HEK293 (cell line): ENCODE measurements at regions of chr17 and their contacts with region 1.

Region 1: DNA sequence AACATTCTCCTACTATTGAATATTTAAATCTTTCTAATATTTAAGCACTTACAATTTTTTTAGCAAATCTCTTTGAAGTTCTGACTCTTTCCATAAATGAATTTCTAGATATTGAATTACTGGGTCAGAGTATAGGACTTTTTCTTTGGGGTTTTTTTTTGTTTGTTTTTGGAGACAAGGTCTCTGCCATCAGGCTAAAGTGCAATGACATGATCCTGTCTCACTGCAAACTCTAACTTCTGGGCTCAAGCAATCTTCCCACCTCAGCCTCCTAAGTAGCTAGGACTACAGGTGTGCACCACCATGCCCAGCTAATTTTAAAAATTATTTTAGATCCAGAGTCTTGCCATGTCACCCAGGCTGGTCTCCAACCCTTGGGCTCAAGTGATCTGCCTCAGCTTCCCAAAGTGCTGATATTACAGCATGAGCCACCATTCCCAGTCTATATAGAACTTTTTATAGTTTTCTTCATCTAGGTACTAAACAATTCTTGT is 24.9 kb downstream of the PIGL start:
- H3K4me3 ChIP-seq: no peak overlapping the region
- H3K27ac ChIP-seq: no peak overlapping the region
- H3K4me1 ChIP-seq: 0 out of 2 replicates have a peak, but pooled peaks cover 3% of the 10 kb centered on the region
- CTCF ChIP-seq: no peak

Region 2: GRCh38 chr17:16217002-16217635 is 24.8 kb before region 1 on chr17 and contains the start of gene PIGL:
- CTCF ChIA-PET with region 1: no interaction called
- POLR2A ChIA-PET with region 1: no interaction called
- H3K4me3 ChIP-seq: peak within 1 kb of the TSS; percentile 99
- H3K27ac ChIP-seq: peak within 1 kb of the TSS; percentile 91
- H3K4me1 ChIP-seq: peaks cover 12% of the 10 kb centered on the region
- CTCF ChIP-seq: peak; percentile 80

Region 3: GRCh38 chr17:16870253-16871245 is 628.6 kb after region 1 on chr17:
- CTCF ChIA-PET with region 1: no interaction called
- POLR2A ChIA-PET with region 1: interaction called, 10 read pairs
- H3K4me3 ChIP-seq: no peak overlapping the region
- H3K27ac ChIP-seq: no peak overlapping the region
- H3K4me1 ChIP-seq: no peaks in the 10 kb centered on the region
- CTCF ChIP-seq: no peak